Activated T-helper 1 cell treated with anti-CD3 and anti-CD28 coated beads, Interleukin-12 subunit alpha, Interleukin-12 subunit beta, Interleukin-2, Interleukin-4 antibody, amounts not matched to agents 30 ng/mL and 10 ng/mL and 1 ng/mL, durations not matched to agents 14 hours and 24 hours and 36 hours (primary cell): ENCODE measurements at regions of chr11 and their contacts with region 1.

Region 1: DNA sequence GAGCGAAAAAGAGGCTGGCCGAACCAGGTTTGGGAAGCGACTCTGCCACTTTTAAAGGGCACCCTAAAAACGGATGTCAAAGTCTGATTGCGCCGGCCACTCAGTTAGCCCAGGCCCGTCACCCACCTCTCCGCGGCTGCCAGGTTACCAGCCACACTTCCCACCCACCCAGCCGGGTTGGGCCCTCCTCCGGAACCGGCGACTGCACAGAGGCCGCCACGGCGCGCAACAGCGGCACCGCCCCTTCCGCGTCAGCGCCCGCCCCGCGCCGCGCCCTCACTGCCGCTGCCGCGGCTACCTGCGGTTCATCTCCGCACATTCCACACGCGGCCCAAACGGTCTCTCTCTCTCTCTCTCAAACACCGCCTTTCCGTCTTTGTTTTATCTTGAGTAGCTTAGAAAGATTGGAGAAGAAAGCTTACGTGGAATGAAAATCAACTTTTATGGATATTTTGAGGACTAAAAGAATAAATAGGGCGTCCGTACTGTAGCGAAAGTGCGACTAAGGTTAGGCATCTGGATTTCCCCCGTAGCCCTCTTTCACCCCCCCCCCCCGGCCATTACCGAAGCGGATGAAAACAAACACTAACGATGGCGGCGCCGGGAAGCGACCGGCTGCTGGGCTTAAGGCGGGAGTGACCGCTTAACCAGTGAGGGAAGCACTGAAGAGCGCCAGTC is at the starts of genes ATG13 and HARBI1:
- DNase-seq: peak; percentile 91
- H3K4me3 Mint-ChIP-seq: peak within 1 kb of the TSS; percentile 89
- H3K27ac Mint-ChIP-seq: peak within 1 kb of the TSS; percentile 100
- H3K4me1 Mint-ChIP-seq: peaks cover 46% of the 10 kb centered on the region
- H3K27me3 Mint-ChIP-seq: no peaks in the 10 kb centered on the region
- total RNA-seq, gene ATG13: 66.4 and 73.8 TPM in 2 replicates
- total RNA-seq, gene HARBI1: 4.5 and 5.3 TPM in 2 replicates

Region 2: DNA sequence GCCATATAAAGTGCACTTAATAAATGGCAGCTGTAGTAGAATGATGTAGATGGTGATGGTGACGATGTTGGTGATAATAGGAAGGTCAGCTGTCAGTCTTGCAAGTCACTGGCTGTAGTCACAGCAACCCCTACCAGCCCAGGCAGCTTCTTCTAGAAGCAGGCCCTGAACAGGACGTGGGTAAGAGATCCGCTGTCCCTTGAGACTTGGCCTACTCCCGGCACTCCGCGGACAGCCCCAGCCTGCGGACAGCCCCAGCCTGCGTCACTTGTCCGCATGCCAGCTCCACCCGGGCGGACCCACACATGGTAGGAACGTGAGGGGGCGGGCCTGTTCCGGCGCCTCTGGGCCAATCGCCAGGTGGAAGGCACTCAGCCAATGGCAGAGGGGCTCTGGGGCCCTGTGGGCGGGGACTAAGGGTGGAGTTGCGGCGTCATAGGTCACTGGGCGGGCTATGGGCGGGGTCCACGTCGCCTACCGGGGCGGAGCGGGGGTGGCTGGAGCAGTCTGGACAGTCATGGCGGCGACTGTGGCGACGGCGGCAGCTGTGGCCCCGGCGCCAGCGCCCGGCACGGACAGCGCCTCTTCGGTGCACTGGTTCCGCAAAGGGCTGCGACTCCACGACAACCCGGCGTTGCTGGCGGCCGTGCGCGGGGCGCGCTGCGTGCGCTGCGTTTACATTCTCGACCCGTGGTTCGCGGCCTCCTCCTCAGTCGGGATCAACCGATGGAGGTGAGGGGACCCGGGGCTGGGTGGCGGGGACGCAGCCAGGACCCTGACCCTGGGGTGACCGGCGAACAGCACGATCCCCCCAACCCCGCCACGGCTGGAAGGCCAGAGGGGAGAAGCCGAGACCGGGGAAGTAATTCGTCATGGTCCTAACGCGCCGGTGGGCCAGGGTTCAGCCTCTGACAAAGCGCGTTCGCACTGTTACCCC is 769.9 kb before region 1 on chr11 and contains the start of gene CRY2:
- intact Hi-C with region 1: loop called (anchors 5 kb)
- DNase-seq: peak; percentile 97
- H3K4me3 Mint-ChIP-seq: peak within 1 kb of the TSS; percentile 86
- H3K27ac Mint-ChIP-seq: peak within 1 kb of the TSS; percentile 94
- H3K4me1 Mint-ChIP-seq: peaks cover 44% of the 10 kb centered on the region
- H3K27me3 Mint-ChIP-seq: peaks cover 9% of the 10 kb centered on the region
- total RNA-seq, gene CRY2: 19.4 and 23.7 TPM in 2 replicates

Region 3: DNA sequence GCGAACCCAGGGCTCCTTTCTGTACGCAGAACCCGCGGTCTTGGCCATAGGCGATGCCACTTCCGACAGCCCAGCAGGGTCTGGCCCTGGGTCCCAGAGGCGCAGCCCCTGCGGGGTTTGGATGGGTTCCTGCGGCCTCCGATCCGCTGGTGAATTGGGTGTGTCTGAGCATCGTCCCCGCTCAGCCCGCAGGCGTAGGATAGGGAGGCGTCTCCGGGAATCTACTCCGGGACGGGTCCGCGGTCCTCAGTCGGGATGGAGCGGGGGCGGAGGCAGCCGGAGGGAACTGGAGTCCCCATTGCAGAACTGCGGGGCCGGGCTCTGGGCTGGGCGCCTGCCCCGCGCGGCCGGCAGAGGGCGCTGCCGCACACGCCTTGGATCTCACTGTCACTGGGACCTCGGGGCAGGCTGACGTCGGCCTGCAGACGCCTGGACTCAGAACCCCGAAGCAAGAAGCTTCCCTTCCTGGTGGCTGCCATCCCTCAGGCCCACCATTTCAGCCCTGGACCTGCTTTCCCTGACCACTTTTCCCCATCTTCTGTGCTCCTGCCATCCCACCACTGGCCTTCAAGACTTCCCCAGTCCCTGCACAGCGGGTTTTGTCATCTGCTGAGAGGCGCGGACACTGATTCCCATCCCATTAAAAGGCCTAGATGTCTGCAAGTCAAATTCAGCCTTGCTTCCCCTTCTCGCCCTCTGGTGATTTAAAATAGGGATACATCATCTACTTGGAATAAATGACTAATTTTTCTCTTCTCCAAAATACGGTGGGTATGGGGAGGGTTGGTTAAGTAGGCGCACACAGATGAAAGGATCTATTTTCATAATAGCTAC is 378.0 kb before region 1 on chr11:
- intact Hi-C with region 1: loop called (anchors 5 kb)
- DNase-seq: peak; percentile 80
- H3K4me3 Mint-ChIP-seq: peak overlapping the region; percentile 78
- H3K27ac Mint-ChIP-seq: no peak overlapping the region
- H3K4me1 Mint-ChIP-seq: peaks cover 48% of the 10 kb centered on the region
- H3K27me3 Mint-ChIP-seq: peaks cover 13% of the 10 kb centered on the region

Region 4: DNA sequence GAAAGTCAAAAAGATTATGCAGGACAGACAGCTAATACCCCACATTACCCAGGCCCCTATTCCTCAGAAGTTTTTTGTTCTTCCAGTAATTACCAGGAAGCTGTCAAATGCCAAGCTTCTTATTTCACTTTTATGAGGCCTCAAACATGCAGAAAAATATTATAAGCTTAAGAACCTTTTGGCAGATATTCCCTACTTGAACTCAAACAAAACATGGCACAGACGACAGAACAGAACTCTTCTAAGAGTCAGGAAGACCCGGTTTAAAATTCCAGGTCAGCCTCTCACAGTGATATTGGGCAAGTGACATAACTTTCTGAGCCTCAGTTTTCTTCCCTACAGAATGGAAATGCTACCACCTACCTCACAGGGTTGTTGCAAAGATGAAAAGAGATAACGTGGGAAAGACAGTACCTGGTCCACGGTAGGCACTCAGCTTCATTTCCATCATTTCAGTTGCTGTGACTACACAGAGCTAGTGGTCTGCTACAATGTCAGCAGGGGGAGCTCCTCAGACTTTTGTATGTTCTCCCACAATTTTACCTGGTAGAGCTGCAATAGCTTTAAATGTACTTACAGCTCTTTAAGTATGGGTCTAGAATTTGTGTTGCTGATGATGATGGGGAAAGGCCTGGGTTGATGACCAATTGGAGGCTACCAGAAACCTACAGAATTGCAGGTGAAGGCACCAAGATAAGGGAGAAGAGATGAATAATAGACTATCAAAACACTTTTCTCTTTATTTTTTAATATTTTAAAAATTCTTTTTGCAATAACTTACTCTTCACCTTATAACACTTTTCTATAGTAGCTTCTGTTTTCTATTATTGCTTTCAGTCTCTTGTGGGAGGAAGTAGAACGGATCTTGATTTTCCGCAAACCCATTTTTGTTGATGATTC is 127.2 kb before region 1 on chr11:
- intact Hi-C with region 1: loop called (anchors 5 kb)
- DNase-seq: peak; percentile 18
- H3K4me3 Mint-ChIP-seq: no peak overlapping the region
- H3K27ac Mint-ChIP-seq: no peak overlapping the region
- H3K4me1 Mint-ChIP-seq: peaks cover 4% of the 10 kb centered on the region
- H3K27me3 Mint-ChIP-seq: no peaks in the 10 kb centered on the region

Region 5: DNA sequence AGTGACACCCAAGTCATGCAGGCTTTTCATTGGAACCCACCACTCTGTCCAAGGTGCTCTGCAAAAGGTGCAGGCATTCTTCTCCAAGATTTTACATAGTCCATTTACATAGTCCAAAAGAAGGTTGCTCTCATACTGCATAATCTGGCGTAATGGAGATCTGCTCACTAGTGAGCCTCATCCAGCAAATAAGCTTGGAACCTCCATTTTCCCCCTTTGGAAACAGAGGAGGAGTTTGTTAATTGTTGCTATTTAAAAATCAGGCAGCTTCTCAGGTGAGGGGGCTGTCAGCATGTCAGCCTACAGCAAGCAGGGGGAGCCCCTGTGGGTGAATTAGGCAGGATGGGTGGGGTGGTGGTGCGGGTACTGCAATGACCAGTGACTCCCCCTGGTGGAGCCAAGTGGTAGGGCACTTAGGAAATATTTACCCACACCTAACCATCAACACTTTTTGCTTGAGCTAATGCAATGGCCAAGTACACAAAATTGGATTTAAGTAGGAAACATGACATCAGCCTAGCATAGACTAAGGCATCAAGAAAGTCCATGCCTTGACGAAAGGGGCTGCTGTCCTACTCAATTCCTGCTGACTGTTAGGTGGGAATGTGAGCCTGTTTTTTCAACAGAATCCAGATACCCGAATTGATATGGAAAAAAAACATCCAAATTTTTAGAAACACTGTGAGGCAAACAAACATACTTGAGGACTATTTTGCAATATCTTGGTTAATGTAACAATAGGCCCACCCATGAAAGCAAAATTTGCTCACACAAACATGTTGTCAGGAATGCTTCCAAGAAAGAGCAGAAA is 87.8 kb before region 1 on chr11:
- intact Hi-C with region 1: no loop called
- DNase-seq: peak; percentile 57
- H3K4me3 Mint-ChIP-seq: no peak overlapping the region
- H3K27ac Mint-ChIP-seq: no peak overlapping the region
- H3K4me1 Mint-ChIP-seq: peaks cover 22% of the 10 kb centered on the region
- H3K27me3 Mint-ChIP-seq: no peaks in the 10 kb centered on the region

Region 6: GRCh38 chr11:46574656-46575055 is 42.5 kb before region 1 on chr11:
- intact Hi-C with region 1: no loop called
- DNase-seq: no peak
- H3K4me3 Mint-ChIP-seq: no peak overlapping the region
- H3K27ac Mint-ChIP-seq: no peak overlapping the region
- H3K4me1 Mint-ChIP-seq: peaks cover 20% of the 10 kb centered on the region
- H3K27me3 Mint-ChIP-seq: no peaks in the 10 kb centered on the region

Region 7: DNA sequence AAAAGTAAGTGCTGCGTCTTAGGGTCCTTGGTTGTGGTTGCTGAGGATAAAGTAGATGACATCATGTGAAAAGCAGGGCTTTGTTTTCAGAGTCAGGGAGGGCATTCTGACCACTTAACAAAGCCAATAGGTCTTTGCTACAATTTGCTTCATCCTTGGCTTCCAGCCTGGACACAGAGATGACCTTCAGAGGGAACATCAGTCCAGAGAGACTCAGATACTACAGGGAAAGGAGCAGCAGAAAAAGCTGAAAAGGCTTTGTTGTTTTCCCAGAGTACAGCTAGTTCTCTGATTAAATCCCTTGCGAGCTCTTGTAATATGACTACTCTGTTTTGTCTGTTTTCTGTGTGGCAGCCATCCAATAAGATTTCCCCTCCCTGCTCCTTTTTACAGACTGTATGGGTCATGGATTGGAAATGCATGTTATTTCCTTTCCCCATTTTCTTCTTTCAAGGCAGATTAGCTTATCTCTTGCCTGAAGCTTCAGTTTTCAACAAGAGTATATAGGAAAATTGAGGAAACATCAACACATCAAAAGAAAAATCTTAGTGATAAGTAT is 32.1 kb after region 1 on chr11:
- intact Hi-C with region 1: no loop called
- DNase-seq: no peak
- H3K4me3 Mint-ChIP-seq: no peak overlapping the region
- H3K27ac Mint-ChIP-seq: no peak overlapping the region
- H3K4me1 Mint-ChIP-seq: no peaks in the 10 kb centered on the region
- H3K27me3 Mint-ChIP-seq: no peaks in the 10 kb centered on the region

Region 8: DNA sequence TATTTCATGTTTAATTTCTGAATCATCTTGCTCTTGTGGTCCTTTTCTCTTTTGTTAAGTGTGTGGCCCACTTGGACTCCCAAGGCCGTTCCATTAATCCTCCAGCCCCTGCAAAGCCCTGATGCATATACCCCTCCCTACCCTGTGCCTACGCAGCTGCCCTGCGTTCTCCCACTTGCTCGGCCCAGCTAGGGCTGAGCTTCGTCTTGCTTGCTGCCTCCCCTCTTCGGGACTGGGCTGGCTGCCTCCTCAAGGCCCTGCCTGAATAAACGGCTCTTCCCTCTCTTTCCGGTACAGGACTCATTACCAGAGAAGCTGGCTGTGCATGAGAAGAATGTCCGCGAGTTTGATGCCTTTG is 54.8 kb after region 1 on chr11:
- intact Hi-C with region 1: loop called (anchors 1 kb)
- DNase-seq: no peak
- H3K4me3 Mint-ChIP-seq: peak overlapping the region; percentile 45
- H3K27ac Mint-ChIP-seq: peak overlapping the region; percentile 88
- H3K4me1 Mint-ChIP-seq: peaks cover 53% of the 10 kb centered on the region
- H3K27me3 Mint-ChIP-seq: no peaks in the 10 kb centered on the region

Region 9: GRCh38 chr11:46845740-46846509 is 228.8 kb after region 1 on chr11 and contains the start of gene CKAP5:
- intact Hi-C with region 1: loop called (anchors 1 kb)
- DNase-seq: peak; percentile 87
- H3K4me3 Mint-ChIP-seq: peak within 1 kb of the TSS; percentile 98
- H3K27ac Mint-ChIP-seq: peak within 1 kb of the TSS; percentile 98
- H3K4me1 Mint-ChIP-seq: peaks cover 41% of the 10 kb centered on the region
- H3K27me3 Mint-ChIP-seq: peaks cover 4% of the 10 kb centered on the region
- total RNA-seq, gene CKAP5: 121 TPM in 2 replicates